Ovary (tissue), 10 donors: ENCODE measurements at regions of chr3 and their contacts with region 1.

Region 1: DNA sequence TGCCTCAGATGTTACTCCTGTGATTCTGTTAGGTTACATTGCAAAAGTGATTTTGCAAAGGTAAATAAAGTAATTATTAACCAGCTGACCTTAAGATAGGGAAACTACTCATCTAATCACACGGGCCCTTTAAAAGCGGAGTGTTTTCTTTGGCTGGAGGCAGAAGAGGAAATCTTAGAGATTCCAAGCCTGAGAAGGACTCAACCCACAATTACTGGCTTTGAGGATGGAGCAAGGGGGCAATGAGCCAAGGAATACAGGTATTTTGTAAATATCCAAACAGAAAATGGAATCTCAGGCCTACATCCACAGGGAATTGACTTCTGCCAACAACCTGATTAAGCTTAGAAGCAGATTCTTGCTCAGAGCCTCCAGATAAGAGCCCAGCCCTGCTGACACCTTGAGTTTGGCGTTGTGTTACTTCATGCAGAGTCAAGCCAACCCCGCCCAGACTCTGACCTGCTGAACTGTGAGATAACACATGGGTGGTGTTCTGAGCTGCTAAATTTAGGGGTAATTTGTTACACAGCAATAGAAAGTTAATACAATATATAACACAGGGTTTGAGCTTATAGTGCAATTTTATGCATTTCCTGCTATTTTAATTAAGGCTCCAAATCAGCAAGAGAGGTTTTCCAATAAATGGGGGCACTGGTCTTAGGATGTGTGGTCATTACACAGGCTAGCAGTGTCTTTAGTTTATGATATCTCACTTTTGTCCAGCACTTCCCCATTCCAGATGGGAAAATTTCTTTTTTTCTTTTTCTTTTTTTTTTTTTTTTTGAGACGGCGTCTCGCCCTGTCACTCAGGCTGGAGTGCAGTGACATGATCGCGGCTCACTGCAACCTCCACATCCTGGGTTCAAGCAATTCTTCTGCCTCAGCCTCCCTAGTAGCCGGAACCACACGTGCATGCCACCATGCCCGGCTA is 19.5 kb downstream of the NFKBIZ start:
- DNase-seq: no peak
- H3K4me3 ChIP-seq: no peak overlapping the region
- H3K27ac ChIP-seq: no peak overlapping the region
- H3K4me1 ChIP-seq: no peaks in the 10 kb centered on the region
- H3K27me3 ChIP-seq: no peaks in the 10 kb centered on the region
- CTCF ChIP-seq: no peak
- EP300 ChIP-seq: no peak
- POLR2A ChIP-seq: no peak

Region 2: DNA sequence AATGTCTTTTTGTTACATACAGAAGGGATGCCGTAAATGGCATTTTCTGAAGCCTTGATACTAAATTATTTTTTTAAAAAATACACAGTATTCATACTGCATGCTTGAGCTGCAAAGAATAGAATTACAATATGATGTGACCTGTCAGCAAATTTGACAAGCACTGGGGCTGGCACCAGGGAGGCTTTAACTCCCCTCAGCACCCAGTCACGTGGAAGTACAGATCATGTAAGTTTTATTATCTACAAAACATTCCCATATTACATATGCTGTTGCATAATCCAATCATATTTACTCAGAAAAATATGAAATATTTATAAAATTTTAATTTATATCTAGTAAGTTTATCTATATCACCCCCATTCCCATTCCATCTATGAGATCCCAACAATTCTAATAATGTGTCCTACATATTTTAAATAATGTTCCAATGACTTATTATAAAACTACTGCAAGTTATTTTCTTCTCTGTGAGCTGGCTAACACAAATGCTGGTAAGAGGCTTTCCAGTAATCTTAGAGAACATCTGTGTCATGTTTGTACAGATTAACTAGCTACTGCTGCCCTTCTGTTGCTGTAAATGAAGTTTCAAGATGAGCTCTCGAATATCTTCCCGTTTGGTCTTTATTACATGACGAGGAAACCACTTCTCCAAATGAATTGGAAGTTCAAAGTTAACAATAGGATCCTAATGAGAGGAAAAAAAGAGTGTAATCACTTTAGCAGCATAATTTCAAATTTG is 543.2 kb before region 1 on chr3:
- intact Hi-C with region 1: no loop called
- DNase-seq: no peak
- H3K4me3 ChIP-seq: no peak overlapping the region
- H3K27ac ChIP-seq: no peak overlapping the region
- H3K4me1 ChIP-seq: no peaks in the 10 kb centered on the region
- H3K27me3 ChIP-seq: no peaks in the 10 kb centered on the region
- CTCF ChIP-seq: no peak
- EP300 ChIP-seq: no peak
- POLR2A ChIP-seq: no peak

Region 3: DNA sequence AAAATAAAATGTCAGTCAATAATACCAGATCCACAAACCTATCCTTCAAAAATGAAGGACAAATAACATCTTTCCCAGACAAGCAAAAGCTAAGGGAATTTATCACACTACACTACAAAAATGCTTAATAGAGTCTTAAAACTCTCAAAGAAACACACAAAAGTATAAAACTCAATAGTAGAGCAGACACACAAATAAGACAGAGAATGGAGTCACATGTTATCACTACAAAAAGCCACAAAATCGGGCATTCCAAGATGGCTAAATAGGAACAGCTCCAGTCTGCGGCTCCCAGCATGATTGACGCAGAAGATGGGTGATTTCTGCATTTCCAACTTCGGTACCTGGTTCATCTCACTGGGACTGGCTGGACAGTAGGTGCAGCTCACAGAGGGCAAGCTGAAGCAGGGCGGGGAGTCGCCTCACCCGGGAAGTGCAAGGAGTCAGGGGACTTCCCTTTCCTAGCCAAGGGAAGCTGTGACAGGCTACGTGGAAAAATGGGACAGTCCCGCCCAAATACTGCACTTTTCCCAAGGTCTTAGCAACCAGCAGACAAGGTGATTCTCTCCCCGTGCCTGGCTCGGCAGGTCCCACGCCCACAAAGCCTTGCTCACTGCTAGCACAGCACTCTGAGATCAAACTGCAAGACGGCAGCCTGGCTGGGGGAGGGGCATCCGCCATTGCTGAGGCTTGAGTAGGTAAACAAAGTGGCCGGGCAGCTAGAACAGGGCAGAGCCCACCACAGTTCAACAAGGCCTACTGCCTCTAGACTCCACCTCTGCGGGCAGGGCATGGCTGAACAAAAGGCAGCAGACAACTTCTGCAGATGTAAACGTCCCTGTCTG is 402.1 kb before region 1 on chr3:
- intact Hi-C with region 1: loop called in 1 of 4 experiments (anchors 10 kb)
- DNase-seq: no peak
- H3K4me3 ChIP-seq: no peak overlapping the region
- H3K27ac ChIP-seq: no peak overlapping the region
- H3K4me1 ChIP-seq: no peaks in the 10 kb centered on the region
- H3K27me3 ChIP-seq: no peaks in the 10 kb centered on the region
- CTCF ChIP-seq: no peak
- EP300 ChIP-seq: no peak
- POLR2A ChIP-seq: no peak

Region 4: GRCh38 chr3:101573449-101574387 is 295.1 kb before region 1 on chr3 and contains the start of gene PCNP:
- intact Hi-C with region 1: no loop called
- DNase-seq: peak; percentile 98 to 99 (median 99)
- H3K4me3 ChIP-seq: peak within 1 kb of the TSS; percentile 84
- H3K27ac ChIP-seq: peak within 1 kb of the TSS; percentile 92 to 96
- H3K4me1 ChIP-seq: peaks cover 4% of the 10 kb centered on the region
- H3K27me3 ChIP-seq: no peaks in the 10 kb centered on the region
- CTCF ChIP-seq: peak; percentile 71 to 88 (median 88)
- EP300 ChIP-seq: no peak
- POLR2A ChIP-seq: peak; percentile 86
- total RNA-seq, gene PCNP: 104 to 237 (median 166) TPM

Region 5: DNA sequence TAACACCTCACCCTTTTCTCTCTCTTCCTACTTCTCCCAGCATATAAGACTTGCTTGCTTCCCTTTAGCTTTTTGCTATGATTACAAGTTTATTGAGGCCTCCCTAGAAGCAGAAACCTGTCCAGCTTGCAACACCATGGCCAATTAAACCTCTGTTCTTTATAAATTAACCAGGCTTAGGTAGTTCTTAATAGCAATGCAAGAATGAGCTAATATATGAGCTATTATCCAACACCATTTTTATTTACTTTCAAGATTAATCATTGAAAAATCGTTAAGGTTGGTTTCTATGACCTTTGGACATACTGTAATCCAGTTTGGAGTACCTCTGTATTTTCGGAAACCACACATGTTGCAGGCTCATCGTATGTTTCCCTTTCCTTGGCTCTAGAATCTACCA is 1209.1 kb after region 1 on chr3:
- intact Hi-C with region 1: no loop called
- DNase-seq: no peak
- H3K4me3 ChIP-seq: no peak overlapping the region
- H3K27ac ChIP-seq: no peak overlapping the region
- H3K4me1 ChIP-seq: no peaks in the 10 kb centered on the region
- H3K27me3 ChIP-seq: no peaks in the 10 kb centered on the region
- CTCF ChIP-seq: no peak
- EP300 ChIP-seq: no peak
- POLR2A ChIP-seq: no peak